Caco-2 (cell line): ENCODE measurements at regions of chr3 and their contacts with region 1.

Region 1: DNA sequence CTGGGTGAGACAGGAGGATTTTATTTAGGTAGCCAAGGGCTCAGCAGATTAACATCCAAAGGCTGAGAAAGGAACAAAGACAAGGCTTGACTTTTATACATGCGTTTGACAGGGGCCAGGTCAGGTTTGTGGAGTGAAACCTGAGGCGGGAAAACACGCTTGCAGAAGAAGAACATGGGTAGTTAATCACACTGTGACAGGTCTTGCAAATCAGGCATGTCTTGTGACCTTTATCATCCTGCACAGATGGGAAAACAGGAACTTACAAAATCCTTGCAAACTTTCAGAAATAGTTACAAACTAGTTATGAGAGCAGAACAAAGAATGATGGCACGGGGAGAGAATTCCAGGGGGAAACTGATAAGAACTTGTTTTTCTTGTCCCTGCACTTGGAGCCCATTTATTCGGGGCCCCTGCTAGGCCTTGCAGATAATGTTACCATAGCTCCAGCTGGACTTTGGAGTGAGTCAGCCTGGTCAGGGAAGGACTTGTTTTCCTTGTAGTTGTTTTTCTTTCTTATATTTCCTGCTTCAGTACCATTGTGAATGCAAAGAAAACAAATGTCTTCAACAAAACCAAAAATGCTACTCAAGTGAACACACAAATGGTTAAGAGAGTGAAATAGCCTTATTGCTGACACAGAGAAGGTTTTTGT is 965.9 kb upstream of the ROBO1 start:
- DNase-seq: peak; percentile 87 to 94
- H3K4me3 ChIP-seq: no peak overlapping the region
- H3K4me3 Mint-ChIP-seq: peak overlapping the region; percentile 50
- H3K27ac Mint-ChIP-seq: peak overlapping the region; percentile 68
- H3K4me1 ChIP-seq: peaks cover 33% of the 10 kb centered on the region
- H3K4me1 Mint-ChIP-seq: peaks cover 10% of the 10 kb centered on the region
- H3K27me3 ChIP-seq: no peaks in the 10 kb centered on the region
- H3K27me3 Mint-ChIP-seq: no peaks in the 10 kb centered on the region
- CTCF ChIP-seq: no peak

Region 2: DNA sequence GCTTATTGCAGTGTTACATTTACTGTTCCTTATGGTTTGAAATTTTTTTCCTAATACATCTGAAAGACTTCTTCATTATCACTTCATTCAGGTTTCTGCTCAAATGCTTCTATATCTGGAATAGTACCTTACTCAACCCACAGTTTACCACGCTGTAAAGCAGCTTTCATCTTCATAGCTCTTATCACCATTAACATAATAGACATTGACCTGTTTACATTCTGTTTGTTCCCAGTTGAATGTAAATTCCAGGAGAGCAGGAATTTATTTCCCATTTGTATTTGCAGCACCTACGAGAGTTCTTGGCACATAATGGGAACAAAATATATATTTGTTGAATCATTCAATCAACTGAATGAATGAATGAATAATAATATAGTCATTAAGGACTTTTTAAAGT is 121.3 kb before region 1 on chr3:
- CTCF ChIA-PET with region 1: no interaction called
- POLR2A ChIA-PET with region 1: no interaction called
- intact Hi-C with region 1: loop called (anchors 2 kb)
- DNase-seq: peak in 1 of 2 experiments; percentile 38
- H3K4me3 ChIP-seq: no peak overlapping the region
- H3K4me3 Mint-ChIP-seq: no peak overlapping the region
- H3K27ac Mint-ChIP-seq: peak overlapping the region; percentile 12
- H3K4me1 ChIP-seq: peaks cover 28% of the 10 kb centered on the region
- H3K4me1 Mint-ChIP-seq: peaks cover 18% of the 10 kb centered on the region
- H3K27me3 ChIP-seq: no peaks in the 10 kb centered on the region
- H3K27me3 Mint-ChIP-seq: no peaks in the 10 kb centered on the region
- CTCF ChIP-seq: no peak

Region 3: GRCh38 chr3:80618295-80619256 is 115.1 kb before region 1 on chr3:
- CTCF ChIA-PET with region 1: no interaction called
- POLR2A ChIA-PET with region 1: no interaction called
- intact Hi-C with region 1: loop called (anchors 1 kb)
- DNase-seq: peak in 1 of 2 experiments; percentile 21
- H3K4me3 ChIP-seq: no peak overlapping the region
- H3K4me3 Mint-ChIP-seq: no peak overlapping the region
- H3K27ac Mint-ChIP-seq: no peak overlapping the region
- H3K4me1 ChIP-seq: peaks cover 16% of the 10 kb centered on the region
- H3K4me1 Mint-ChIP-seq: peaks cover 6% of the 10 kb centered on the region
- H3K27me3 ChIP-seq: no peaks in the 10 kb centered on the region
- H3K27me3 Mint-ChIP-seq: no peaks in the 10 kb centered on the region
- CTCF ChIP-seq: no peak

Region 4: GRCh38 chr3:80677796-80678195 is 55.9 kb before region 1 on chr3:
- CTCF ChIA-PET with region 1: no interaction called
- POLR2A ChIA-PET with region 1: no interaction called
- intact Hi-C with region 1: no loop called
- DNase-seq: no peak
- H3K4me3 ChIP-seq: no peak overlapping the region
- H3K4me3 Mint-ChIP-seq: no peak overlapping the region
- H3K27ac Mint-ChIP-seq: no peak overlapping the region
- H3K4me1 ChIP-seq: no peaks in the 10 kb centered on the region
- H3K4me1 Mint-ChIP-seq: no peaks in the 10 kb centered on the region
- H3K27me3 ChIP-seq: no peaks in the 10 kb centered on the region
- H3K27me3 Mint-ChIP-seq: no peaks in the 10 kb centered on the region
- CTCF ChIP-seq: no peak

Region 5: GRCh38 chr3:80696281-80696680 is 37.4 kb before region 1 on chr3:
- CTCF ChIA-PET with region 1: no interaction called
- POLR2A ChIA-PET with region 1: no interaction called
- intact Hi-C with region 1: loop called (anchors 1 kb)
- DNase-seq: peak; percentile 55 to 73
- H3K4me3 ChIP-seq: no peak overlapping the region
- H3K4me3 Mint-ChIP-seq: peak overlapping the region; percentile 38
- H3K27ac Mint-ChIP-seq: no peak overlapping the region
- H3K4me1 ChIP-seq: peaks cover 21% of the 10 kb centered on the region
- H3K4me1 Mint-ChIP-seq: peaks cover 15% of the 10 kb centered on the region
- H3K27me3 ChIP-seq: no peaks in the 10 kb centered on the region
- H3K27me3 Mint-ChIP-seq: no peaks in the 10 kb centered on the region
- CTCF ChIP-seq: no peak

Region 6: GRCh38 chr3:80769681-80770080 is 36.0 kb after region 1 on chr3:
- CTCF ChIA-PET with region 1: no interaction called
- POLR2A ChIA-PET with region 1: no interaction called
- intact Hi-C with region 1: loop called (anchors 1 kb)
- DNase-seq: no peak
- H3K4me3 ChIP-seq: no peak overlapping the region
- H3K4me3 Mint-ChIP-seq: no peak overlapping the region
- H3K27ac Mint-ChIP-seq: no peak overlapping the region
- H3K4me1 ChIP-seq: no peaks in the 10 kb centered on the region
- H3K4me1 Mint-ChIP-seq: no peaks in the 10 kb centered on the region
- H3K27me3 ChIP-seq: no peaks in the 10 kb centered on the region
- H3K27me3 Mint-ChIP-seq: no peaks in the 10 kb centered on the region
- CTCF ChIP-seq: no peak

Region 7: DNA sequence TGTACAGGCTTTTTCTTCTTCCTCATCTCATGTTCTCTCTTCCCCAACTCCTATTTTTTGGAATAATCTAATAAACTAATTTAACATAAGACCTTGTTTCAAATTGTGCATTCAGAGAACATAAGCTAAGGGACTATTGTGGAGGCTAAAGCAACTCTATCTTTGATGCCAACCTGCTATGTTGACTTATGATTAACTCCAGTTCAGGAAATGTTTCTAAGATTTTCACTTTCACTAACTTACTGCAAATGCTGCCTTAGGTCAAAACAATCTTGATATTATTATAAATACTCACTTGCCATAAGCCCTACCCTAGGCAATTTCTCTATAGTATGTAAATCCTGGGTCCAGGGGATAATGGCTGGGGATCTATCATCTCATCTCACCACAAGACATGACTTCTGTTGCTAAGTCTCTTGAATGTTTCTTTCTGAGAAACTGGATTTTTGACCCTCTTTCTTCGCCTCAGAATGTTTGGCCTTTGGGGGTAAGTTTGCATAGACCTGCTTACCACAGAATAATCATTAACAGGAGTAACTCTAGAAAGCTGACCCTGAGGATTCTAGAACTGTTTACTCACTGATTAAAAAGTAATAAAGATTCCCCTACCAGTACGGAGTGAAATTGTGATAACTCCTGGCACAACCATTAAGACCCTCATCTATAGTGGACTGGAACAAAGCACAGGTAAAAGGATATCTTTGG is 259.7 kb after region 1 on chr3:
- CTCF ChIA-PET with region 1: no interaction called
- POLR2A ChIA-PET with region 1: no interaction called
- intact Hi-C with region 1: loop called (anchors 1 kb)
- DNase-seq: peak in 1 of 2 experiments; percentile 27
- H3K4me3 ChIP-seq: no peak overlapping the region
- H3K4me3 Mint-ChIP-seq: no peak overlapping the region
- H3K27ac Mint-ChIP-seq: peak overlapping the region; percentile 51
- H3K4me1 ChIP-seq: peaks cover 47% of the 10 kb centered on the region
- H3K4me1 Mint-ChIP-seq: peaks cover 31% of the 10 kb centered on the region
- H3K27me3 ChIP-seq: no peaks in the 10 kb centered on the region
- H3K27me3 Mint-ChIP-seq: no peaks in the 10 kb centered on the region
- CTCF ChIP-seq: no peak